Mammary epithelial cell (primary cell): ENCODE measurements at regions of chr5 and their contacts with region 1.

Region 1: GRCh38 chr5:118619823-118620222 is 368.5 kb downstream of the DTWD2 start:
- DNase-seq: no peak
- H3K4me3 ChIP-seq: no peak overlapping the region
- H3K27ac ChIP-seq: no peak overlapping the region
- H3K4me1 ChIP-seq: no peaks in the 10 kb centered on the region
- H3K27me3 ChIP-seq: no peaks in the 10 kb centered on the region
- CTCF ChIP-seq: no peak

Region 2: GRCh38 chr5:118553662-118554061 is 66.2 kb before region 1 on chr5:
- CTCF ChIA-PET with region 1: no interaction called
- dilution Hi-C with region 1: no loop called
- in situ Hi-C with region 1: no loop called
- intact Hi-C with region 1: no loop called
- DNase-seq: peak; percentile 70
- H3K4me3 ChIP-seq: no peak overlapping the region
- H3K27ac ChIP-seq: no peak overlapping the region
- H3K4me1 ChIP-seq: peaks cover 49% of the 10 kb centered on the region
- H3K27me3 ChIP-seq: no peaks in the 10 kb centered on the region
- CTCF ChIP-seq: no peak

Region 3: GRCh38 chr5:118791926-118792734 is 172.3 kb after region 1 on chr5:
- CTCF ChIA-PET with region 1: no interaction called
- dilution Hi-C with region 1: no loop called
- in situ Hi-C with region 1: no loop called
- intact Hi-C with region 1: loop called (anchors 2 kb)
- DNase-seq: peak; percentile 41
- H3K4me3 ChIP-seq: no peak overlapping the region
- H3K27ac ChIP-seq: no peak overlapping the region
- H3K4me1 ChIP-seq: peaks cover 4% of the 10 kb centered on the region
- H3K27me3 ChIP-seq: no peaks in the 10 kb centered on the region
- CTCF ChIP-seq: peak; percentile 79 to 80

Region 4: DNA sequence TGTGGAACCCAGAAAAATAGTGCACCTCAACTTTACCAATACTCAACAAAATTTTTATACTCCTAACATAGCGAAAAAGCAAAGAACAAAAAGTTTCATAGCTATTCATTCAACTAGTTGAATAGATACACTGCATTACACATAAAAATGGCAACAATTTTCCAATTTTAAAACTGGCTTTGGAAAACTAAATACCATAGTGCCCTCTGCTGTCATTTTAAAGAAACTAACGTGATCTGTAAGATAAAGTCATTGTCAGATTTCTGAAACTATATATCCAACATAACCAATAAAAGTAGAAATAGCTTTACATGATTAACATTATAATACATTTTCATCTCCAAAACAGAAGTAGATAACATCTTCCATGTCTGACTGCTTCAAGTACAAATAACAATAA is 336.9 kb after region 1 on chr5:
- CTCF ChIA-PET with region 1: no interaction called
- dilution Hi-C with region 1: no loop called
- in situ Hi-C with region 1: no loop called
- intact Hi-C with region 1: loop called (anchors 2 kb)
- DNase-seq: peak; percentile 12
- H3K4me3 ChIP-seq: no peak overlapping the region
- H3K27ac ChIP-seq: no peak overlapping the region
- H3K4me1 ChIP-seq: no peaks in the 10 kb centered on the region
- H3K27me3 ChIP-seq: no peaks in the 10 kb centered on the region
- CTCF ChIP-seq: peak; percentile 24 to 46